ENCODE measurements at regions of chr11 and their contacts with region 1.

Region 1: GRCh38 chr11:63838678-63839507 is at the start of gene MARK2:
- DNase-seq: peak; percentile 100
- ATAC-seq: peak; percentile 90
- H3K4me3 Mint-ChIP-seq: peak within 1 kb of the TSS; percentile 97
- H3K27ac Mint-ChIP-seq: peak within 1 kb of the TSS; percentile 87
- H3K4me1 Mint-ChIP-seq: peaks cover 48% of the 10 kb centered on the region
- H3K27me3 Mint-ChIP-seq: no peaks in the 10 kb centered on the region
- total RNA-seq, gene MARK2: 24.3 to 24.9 TPM

Region 2: GRCh38 chr11:63710476-63711217 is 128.2 kb before region 1 on chr11:
- CTCF ChIA-PET with region 1: no interaction called
- POLR2A ChIA-PET with region 1: no interaction called
- intact Hi-C with region 1: no loop called
- DNase-seq: no peak
- ATAC-seq: no peak
- H3K4me3 Mint-ChIP-seq: no peak overlapping the region
- H3K27ac Mint-ChIP-seq: no peak overlapping the region
- H3K4me1 Mint-ChIP-seq: peaks cover 5% of the 10 kb centered on the region
- H3K27me3 Mint-ChIP-seq: no peaks in the 10 kb centered on the region

Region 3: GRCh38 chr11:63768237-63769043 is 70.5 kb before region 1 on chr11 and contains the start of gene ZFTA:
- CTCF ChIA-PET with region 1: no interaction called
- POLR2A ChIA-PET with region 1: no interaction called
- intact Hi-C with region 1: loop called in 1 of 2 experiments (anchors 1 kb)
- DNase-seq: peak; percentile 77
- ATAC-seq: peak; percentile 58
- H3K4me3 Mint-ChIP-seq: peak within 1 kb of the TSS; percentile 96
- H3K27ac Mint-ChIP-seq: peak within 1 kb of the TSS; percentile 78
- H3K4me1 Mint-ChIP-seq: peaks cover 6% of the 10 kb centered on the region
- H3K27me3 Mint-ChIP-seq: peaks cover 20% of the 10 kb centered on the region
- total RNA-seq, gene ZFTA: 1.5 to 1.7 TPM

Region 4: DNA sequence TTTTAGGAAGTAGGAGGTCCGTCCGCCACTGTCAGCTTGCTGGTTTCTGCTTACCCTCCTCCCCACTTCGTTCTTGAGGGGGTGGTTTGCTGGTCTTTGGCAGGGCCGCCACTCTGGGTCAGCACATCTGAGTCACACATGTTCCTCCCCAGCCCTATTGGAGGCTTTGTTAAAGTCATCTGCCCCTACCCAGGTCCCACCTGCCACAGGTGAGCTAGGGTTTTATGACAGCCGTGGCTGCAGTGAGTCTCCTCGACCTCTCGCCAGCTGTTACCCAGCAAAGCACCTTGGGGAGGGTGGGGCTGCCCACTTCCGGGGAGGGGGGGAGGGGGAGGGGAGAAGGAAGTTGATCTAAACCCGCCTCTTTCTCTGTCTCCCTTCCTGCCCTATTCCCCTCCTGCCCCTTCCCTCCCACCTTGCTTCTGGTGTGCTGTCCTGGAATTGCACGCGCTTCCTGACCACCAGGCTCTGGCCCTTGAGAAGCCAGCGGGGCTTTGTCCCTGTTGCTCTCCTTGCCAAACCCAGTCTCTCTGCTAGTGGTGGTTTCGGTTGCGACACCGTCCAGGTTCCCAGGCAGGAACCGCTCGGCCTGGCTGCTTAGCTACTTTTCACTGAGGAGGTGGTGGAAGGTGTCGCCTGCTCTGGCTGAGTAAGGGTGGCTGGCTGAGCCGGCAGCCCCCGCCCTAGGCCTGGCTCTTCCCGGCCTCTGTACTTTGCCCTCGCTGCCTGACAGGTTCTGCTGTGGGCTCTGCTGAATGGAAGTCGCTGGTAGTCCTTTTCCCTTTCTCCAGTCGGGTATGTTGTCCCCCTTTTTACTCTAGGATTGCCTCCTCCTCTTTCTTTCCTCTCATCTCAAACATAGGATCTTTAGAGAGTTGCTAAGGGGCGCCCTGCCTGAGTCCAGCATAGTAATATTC is 49.5 kb after region 1 on chr11:
- CTCF ChIA-PET with region 1: interaction called, 7 read pairs
- POLR2A ChIA-PET with region 1: interaction called, 4 read pairs
- intact Hi-C with region 1: loop called (anchors 1 to 5 kb)
- DNase-seq: peak; percentile 83
- ATAC-seq: peak; percentile 88
- H3K4me3 Mint-ChIP-seq: peak overlapping the region; percentile 81
- H3K27ac Mint-ChIP-seq: peak overlapping the region; percentile 92
- H3K4me1 Mint-ChIP-seq: peaks cover 75% of the 10 kb centered on the region
- H3K27me3 Mint-ChIP-seq: no peaks in the 10 kb centered on the region

Region 5: DNA sequence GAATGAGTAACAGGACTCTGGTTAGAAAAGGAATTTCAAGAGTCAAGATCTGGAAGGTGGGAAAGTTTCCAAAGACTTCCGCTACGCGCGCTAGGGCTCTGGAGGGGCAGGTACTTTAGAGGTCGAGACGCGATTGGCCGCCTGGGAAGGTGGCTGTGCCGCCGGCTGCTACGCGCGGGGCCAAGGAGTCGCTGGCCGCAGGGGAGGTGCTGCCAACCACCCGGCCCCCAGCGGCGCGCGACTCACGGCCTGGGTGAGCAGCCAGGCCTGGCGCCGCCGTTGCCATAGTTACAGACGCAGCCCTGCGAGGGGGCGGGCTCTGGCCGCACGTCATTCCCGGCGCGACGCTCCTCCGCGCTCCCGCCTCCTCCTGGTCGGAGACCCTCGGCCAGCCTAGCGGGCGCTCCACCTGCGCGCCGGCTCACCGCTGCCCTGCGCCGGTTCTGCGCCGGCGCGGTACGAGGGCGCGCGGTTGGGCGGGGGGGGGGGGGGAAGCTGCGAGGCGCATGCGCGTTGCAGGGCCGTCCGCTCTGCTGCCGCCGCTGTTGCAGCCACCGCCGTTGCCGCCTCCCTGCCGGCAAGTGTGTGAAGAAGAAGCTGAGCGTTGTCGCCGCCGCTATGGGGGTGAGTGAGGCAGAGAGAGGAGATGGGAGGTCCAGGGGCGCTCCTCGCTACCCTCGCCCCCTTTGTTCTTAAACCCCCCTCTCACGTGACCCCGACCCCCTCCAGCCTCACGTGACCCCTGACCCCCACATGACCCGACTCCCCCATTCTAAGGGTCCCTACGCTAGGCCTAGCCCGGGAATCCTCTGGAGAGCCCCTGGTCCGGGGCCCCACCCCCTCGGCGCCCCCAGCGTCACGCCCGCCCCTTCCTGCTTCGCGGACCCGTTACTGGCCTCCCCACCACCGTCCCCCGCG is 99.8 kb after region 1 on chr11 and contains the start of gene NAA40:
- CTCF ChIA-PET with region 1: interaction called, 72 read pairs
- POLR2A ChIA-PET with region 1: no interaction called
- intact Hi-C with region 1: loop called (anchors 1 to 2 kb)
- DNase-seq: peak; percentile 97
- ATAC-seq: peak; percentile 93
- H3K4me3 Mint-ChIP-seq: peak within 1 kb of the TSS; percentile 83
- H3K27ac Mint-ChIP-seq: peak within 1 kb of the TSS; percentile 87
- H3K4me1 Mint-ChIP-seq: peaks cover 16% of the 10 kb centered on the region
- H3K27me3 Mint-ChIP-seq: no peaks in the 10 kb centered on the region
- total RNA-seq, gene NAA40: 13.7 to 15.9 TPM

Region 6: GRCh38 chr11:63986156-63986931 is 147.5 kb after region 1 on chr11 and contains the start of gene OTUB1:
- CTCF ChIA-PET with region 1: interaction called, 4 read pairs
- POLR2A ChIA-PET with region 1: interaction called, 3 read pairs
- intact Hi-C with region 1: loop called (anchors 1 to 5 kb)
- DNase-seq: peak; percentile 94
- ATAC-seq: peak; percentile 92
- H3K4me3 Mint-ChIP-seq: peak within 1 kb of the TSS; percentile 93
- H3K27ac Mint-ChIP-seq: peak within 1 kb of the TSS; percentile 89
- H3K4me1 Mint-ChIP-seq: peaks cover 23% of the 10 kb centered on the region
- H3K27me3 Mint-ChIP-seq: no peaks in the 10 kb centered on the region
- total RNA-seq, gene OTUB1: 77.4 to 86.1 TPM

Region 7: DNA sequence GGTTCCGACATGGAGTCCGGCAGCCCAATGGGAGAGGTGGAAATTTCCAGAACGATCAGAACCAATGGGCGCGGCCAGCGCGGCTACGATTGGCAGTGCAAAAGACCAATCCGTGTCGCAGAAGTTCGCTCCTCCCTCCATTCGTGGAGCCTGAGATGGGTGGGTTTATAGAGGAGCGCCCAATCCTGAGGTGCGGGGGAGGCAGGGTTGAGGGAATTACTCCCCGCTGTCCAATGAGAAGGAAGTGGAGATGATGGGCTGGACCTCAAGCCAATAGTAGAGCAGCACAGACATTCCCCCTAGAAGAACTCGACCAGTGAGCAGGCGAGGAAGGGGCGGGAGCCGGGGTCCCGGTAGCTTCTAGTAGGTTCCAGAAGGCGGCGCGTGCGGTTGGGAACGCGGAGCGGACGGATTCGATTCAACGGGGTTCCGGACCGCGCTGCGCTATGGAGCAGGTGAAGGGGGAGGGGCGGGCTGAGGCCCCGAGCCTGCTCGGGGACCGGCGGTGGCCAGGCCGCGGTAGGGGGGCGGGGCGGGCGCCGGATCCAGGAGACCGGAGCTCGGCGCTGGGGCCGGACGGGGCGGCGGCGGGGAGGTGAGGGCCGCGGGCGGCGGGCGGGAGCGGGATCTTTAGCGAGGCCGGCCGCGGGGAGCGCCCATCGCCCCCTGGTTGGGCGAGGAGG is 347.1 kb after region 1 on chr11 and contains the start of gene STIP1:
- CTCF ChIA-PET with region 1: no interaction called
- POLR2A ChIA-PET with region 1: no interaction called
- intact Hi-C with region 1: loop called in 1 of 2 experiments (anchors 1 kb)
- DNase-seq: peak; percentile 99
- ATAC-seq: peak; percentile 92
- H3K4me3 Mint-ChIP-seq: no peak within 1 kb of the TSS
- H3K27ac Mint-ChIP-seq: peak within 1 kb of the TSS; percentile 92
- H3K4me1 Mint-ChIP-seq: peaks cover 42% of the 10 kb centered on the region
- H3K27me3 Mint-ChIP-seq: no peaks in the 10 kb centered on the region
- total RNA-seq, gene STIP1: 398 to 403 TPM